ENCODE measurements at regions of chr10 and their contacts with region 1.

Region 1: DNA sequence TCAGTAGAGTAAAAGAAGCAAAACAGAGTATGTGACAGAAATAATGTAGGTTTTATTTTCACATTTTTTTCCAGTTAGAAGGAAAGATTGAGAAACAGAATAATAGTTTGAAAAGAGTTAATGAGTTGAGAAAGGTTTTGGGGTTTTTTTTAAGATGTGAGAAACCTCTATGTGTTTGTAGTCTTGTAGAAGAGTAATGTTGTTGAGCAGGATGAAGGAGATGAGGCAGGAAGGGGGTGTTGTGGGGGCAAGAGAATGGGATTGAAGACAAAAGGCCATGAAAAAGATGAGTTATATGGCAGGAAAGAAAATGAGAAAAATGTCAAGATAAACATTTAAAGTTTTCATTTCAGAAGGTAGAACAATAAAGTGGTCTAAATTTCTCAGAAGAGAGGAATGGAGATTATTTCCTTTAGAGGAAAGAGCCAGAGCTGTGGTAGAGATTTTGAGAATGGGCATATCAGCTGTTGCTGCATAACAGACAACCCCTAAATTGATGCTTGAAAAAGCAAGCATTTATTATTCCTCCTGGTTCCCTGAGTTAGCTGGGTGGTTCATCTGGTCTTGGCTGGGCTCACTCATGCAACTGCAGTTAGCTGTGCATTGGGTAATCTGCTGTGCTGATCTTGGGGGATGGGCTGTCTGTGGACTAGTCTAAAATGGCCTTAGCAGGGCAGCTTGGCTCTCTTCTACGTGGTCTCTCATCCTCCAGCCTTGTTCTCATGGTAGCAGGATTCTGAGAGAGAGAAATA is 27.1 kb downstream of the PCGF5 start:
- DNase-seq: peak in 1 of 4 donors; percentile 10
- ATAC-seq: no peak
- H3K4me3 ChIP-seq: no peak overlapping the region
- H3K27ac ChIP-seq: no peak overlapping the region
- H3K4me1 ChIP-seq: no peaks in the 10 kb centered on the region
- H3K27me3 ChIP-seq: no peaks in the 10 kb centered on the region
- CTCF ChIP-seq: no peak
- POLR2A ChIP-seq: no peak

Region 2: GRCh38 chr10:90912174-90912573 is 335.4 kb before region 1 on chr10:
- intact Hi-C with region 1: loop called (anchors 10 kb)
- DNase-seq: no peak
- ATAC-seq: no peak
- H3K4me3 ChIP-seq: no peak overlapping the region
- H3K27ac ChIP-seq: no peak overlapping the region
- H3K4me1 ChIP-seq: no peaks in the 10 kb centered on the region
- H3K27me3 ChIP-seq: no peaks in the 10 kb centered on the region
- CTCF ChIP-seq: no peak
- POLR2A ChIP-seq: no peak

Region 3: GRCh38 chr10:91006001-91006751 is 241.4 kb before region 1 on chr10:
- intact Hi-C with region 1: loop called (anchors 10 kb)
- DNase-seq: peak; percentile 45 to 63 (median 62)
- ATAC-seq: peak; percentile 82
- H3K4me3 ChIP-seq: no peak overlapping the region
- H3K27ac ChIP-seq: no peak overlapping the region
- H3K4me1 ChIP-seq: no peaks in the 10 kb centered on the region
- H3K27me3 ChIP-seq: no peaks in the 10 kb centered on the region
- CTCF ChIP-seq: peak; percentile 73 to 92 (median 88)
- POLR2A ChIP-seq: no peak

Region 4: GRCh38 chr10:91198781-91199180 is 48.8 kb before region 1 on chr10:
- intact Hi-C with region 1: no loop called
- DNase-seq: peak in 1 of 4 donors; percentile 33
- ATAC-seq: peak; percentile 38
- H3K4me3 ChIP-seq: no peak overlapping the region
- H3K27ac ChIP-seq: peak overlapping the region in 1 of 4 donors; percentile 8
- H3K4me1 ChIP-seq: peaks cover 14% of the 10 kb centered on the region
- H3K27me3 ChIP-seq: no peaks in the 10 kb centered on the region
- CTCF ChIP-seq: no peak
- POLR2A ChIP-seq: no peak